ENCODE measurements at regions of chr3 and their contacts with region 1.

Region 1: GRCh38 chr3:185824476-185825378 is at the start of gene IGF2BP2:
- DNase-seq: no peak
- ATAC-seq: peak; percentile 81
- H3K4me3 ChIP-seq: peak within 1 kb of the TSS; percentile 65 to 78
- H3K27ac ChIP-seq: peak within 1 kb of the TSS; percentile 97
- H3K4me1 ChIP-seq: peaks cover 29 to 40% of the 10 kb centered on the region in 2 experiments
- H3K27me3 ChIP-seq: no peaks in the 10 kb centered on the region
- CTCF ChIP-seq: no peak
- POLR2A ChIP-seq: peak; percentile 14
- RAD21 ChIP-seq: no peak
- total RNA-seq, gene IGF2BP2: 135 TPM

Region 2: GRCh38 chr3:185813205-185813604 is 11.5 kb before region 1 on chr3:
- CTCF ChIA-PET with region 1: no interaction called
- POLR2A ChIA-PET with region 1: interaction called, 11 read pairs
- RAD21 ChIA-PET with region 1: no interaction called
- intact Hi-C with region 1: no loop called
- DNase-seq: no peak
- ATAC-seq: no peak
- H3K4me3 ChIP-seq: no peak overlapping the region
- H3K27ac ChIP-seq: no peak overlapping the region
- H3K4me1 ChIP-seq: peaks cover 17 to 57% of the 10 kb centered on the region in 2 experiments
- H3K27me3 ChIP-seq: no peaks in the 10 kb centered on the region
- CTCF ChIP-seq: no peak
- POLR2A ChIP-seq: no peak
- RAD21 ChIP-seq: no peak

Region 3: DNA sequence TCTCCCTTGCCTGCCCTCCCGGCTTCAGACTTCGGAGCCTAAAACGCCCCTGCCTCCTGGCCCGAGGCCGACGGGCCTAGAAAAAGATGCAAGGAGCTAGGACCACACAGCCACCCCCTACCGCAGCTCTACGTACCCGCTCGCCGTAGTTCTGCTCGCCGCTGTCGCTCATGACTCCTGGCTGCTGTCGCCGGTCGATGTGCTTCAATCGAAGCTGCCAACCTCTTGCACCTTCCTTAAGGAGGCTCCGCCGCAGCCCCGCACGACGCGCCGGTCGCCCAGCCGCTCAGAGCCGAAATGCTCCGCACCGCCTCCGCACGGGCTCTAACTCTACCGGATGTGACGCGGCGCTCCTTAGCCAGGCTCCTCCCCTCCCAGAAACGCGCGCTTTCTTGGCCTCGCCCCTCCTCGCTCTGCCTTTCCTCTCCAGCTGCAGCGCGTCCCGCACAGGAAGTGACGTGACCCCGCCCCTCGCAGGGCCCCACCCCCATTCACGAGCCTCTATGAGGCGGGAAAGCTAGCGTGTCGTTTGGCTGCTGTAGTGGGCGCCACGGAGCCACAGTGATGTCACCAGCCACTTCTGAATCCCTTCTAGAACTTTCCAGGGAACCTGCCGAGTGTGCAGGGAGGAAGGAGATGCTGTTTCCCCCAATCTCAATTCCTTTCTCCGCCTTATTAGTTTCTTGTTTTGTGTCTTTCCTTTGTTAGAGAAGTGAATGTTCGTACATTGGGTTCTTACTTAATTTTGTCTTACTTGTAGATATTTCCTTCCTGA is 113.1 kb after region 1 on chr3 and contains the start of gene TRA2B:
- CTCF ChIA-PET with region 1: no interaction called
- POLR2A ChIA-PET with region 1: no interaction called
- RAD21 ChIA-PET with region 1: no interaction called
- intact Hi-C with region 1: loop called (anchors 5 kb)
- DNase-seq: peak; percentile 95
- ATAC-seq: peak; percentile 93
- H3K4me3 ChIP-seq: peak within 1 kb of the TSS; percentile 69 to 85
- H3K27ac ChIP-seq: peak within 1 kb of the TSS; percentile 99
- H3K4me1 ChIP-seq: peaks cover 20 to 48% of the 10 kb centered on the region in 2 experiments
- H3K27me3 ChIP-seq: no peaks in the 10 kb centered on the region
- CTCF ChIP-seq: peak in 2 of 3 experiments; percentile 26 to 30; a peak in 2 of 6 replicates
- POLR2A ChIP-seq: peak; percentile 98
- RAD21 ChIP-seq: no peak
- total RNA-seq, gene TRA2B: 172 TPM

Region 4: GRCh38 chr3:186277268-186277909 is 452.7 kb after region 1 on chr3:
- CTCF ChIA-PET with region 1: no interaction called
- POLR2A ChIA-PET with region 1: no interaction called
- RAD21 ChIA-PET with region 1: no interaction called
- intact Hi-C with region 1: no loop called
- DNase-seq: peak; percentile 40
- ATAC-seq: peak; percentile 99
- H3K4me3 ChIP-seq: no peak overlapping the region
- H3K27ac ChIP-seq: no peak overlapping the region
- H3K4me1 ChIP-seq: peaks cover 0 to 5% of the 10 kb centered on the region in 2 experiments; a peak in 1 of 4 replicates
- H3K27me3 ChIP-seq: no peaks in the 10 kb centered on the region
- CTCF ChIP-seq: peak; percentile 49 to 80 (median 68)
- POLR2A ChIP-seq: no peak
- RAD21 ChIP-seq: peak; percentile 93